Lower leg skin (tissue), 4 donors: ENCODE measurements at regions of chr11 and their contacts with region 1.

Region 1: DNA sequence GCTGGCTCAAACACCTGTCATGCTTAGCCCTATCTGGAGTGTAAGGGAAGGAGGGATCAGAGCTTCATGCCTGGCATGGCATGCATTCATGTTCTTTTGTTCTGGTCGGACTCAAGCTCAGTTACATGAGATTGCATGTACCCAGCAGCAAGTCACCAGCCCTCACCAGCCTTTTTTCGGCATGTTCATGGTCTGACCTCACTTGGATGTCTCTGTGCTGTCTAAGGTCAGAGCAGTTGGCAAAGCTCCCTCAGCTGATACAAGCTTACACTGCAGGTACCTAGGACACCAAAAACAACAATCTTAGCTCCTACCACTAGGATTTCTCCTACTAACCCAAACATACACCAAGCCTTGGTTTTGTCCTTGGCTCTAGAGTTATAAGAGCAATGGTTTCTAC is 152.6 kb downstream of the BARX2 start:
- DNase-seq: no peak
- H3K4me3 ChIP-seq: no peak overlapping the region
- CTCF ChIP-seq: no peak
- POLR2A ChIP-seq: no peak

Region 2: DNA sequence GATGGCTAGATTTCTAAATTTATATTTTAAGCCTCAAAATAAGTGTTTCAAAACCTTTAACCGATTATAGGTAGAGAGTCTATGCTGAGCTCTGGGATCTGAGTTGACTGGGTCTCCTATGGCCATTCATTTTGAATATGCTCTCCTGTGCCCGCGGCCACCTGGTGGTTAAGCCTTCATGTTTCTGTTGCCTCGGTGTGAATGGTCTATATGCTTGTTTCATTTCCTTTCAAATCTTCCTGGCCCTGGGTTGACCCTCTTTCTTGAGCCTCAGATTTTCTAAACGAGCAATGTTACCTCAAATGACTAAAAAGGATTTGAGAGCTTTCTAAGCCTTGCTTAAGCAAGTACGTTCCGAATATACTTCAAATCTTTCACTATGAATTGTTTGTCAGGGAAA is 1738.4 kb before region 1 on chr11:
- intact Hi-C with region 1: no loop called
- DNase-seq: no peak
- H3K4me3 ChIP-seq: no peak overlapping the region
- CTCF ChIP-seq: no peak
- POLR2A ChIP-seq: no peak

Region 3: GRCh38 chr11:129331871-129332274 is 196.4 kb before region 1 on chr11:
- intact Hi-C with region 1: no loop called
- DNase-seq: peak; percentile 83 to 95
- H3K4me3 ChIP-seq: no peak overlapping the region
- CTCF ChIP-seq: peak in 1 of 3 donors; percentile 84
- POLR2A ChIP-seq: no peak

Region 4: DNA sequence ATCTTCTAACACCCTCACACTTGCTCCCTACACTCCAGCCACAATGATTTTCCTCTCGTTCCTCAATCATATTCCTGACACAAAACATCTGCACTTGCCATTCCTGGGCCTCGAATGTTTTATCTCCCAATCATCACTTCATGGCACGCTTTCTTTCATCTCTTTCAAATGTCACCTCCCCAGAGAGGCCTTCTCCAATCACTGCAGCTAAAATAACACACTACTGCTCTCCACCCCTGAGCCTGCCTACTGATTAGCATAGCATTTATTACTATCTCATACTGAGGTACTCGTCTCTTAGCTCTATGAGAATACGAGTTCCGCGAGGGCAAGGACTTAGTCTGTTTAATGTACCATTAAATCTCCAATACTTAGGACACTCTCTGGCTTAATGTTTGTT is 343.6 kb after region 1 on chr11:
- intact Hi-C with region 1: loop called (anchors 5 kb)
- DNase-seq: no peak
- H3K4me3 ChIP-seq: no peak overlapping the region
- CTCF ChIP-seq: no peak
- POLR2A ChIP-seq: no peak